Heart left ventricle (tissue), 16 donors: ENCODE measurements at regions of chr9 and their contacts with region 1.

Region 1: DNA sequence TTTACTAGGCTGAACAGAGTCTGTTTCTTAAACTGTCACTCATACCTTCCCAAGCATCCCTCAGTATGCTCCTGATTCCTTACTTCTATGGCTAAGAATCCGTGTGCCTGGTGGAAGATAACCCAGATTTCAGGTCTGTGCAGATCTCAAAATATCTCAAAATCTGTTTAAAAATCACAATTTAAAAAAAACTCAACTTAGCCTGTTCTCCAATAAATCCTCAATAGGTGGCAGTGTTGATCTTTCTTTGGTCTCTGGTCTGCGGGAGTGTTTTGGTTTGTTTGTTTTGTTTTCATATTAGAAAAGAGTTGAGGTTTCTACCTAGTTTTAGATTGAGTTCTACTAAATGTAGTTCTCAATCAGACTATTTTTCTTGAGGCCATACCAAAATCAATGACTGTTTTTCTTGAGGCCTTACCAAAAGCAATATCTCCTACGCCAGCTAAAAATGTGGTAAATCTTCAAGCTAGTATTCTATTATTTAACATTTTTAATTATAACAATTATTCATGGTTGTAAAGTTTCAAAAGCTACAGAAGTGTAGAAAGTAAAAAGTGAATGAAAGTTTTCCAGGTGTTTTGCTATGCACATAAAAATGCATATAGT is 57.9 kb downstream of the TGFBR1 start:
- DNase-seq: no peak
- ATAC-seq: no peak
- H3K4me3 ChIP-seq: no peak overlapping the region
- H3K27ac ChIP-seq: no peak overlapping the region
- H3K4me1 ChIP-seq: peaks cover 0 to 3% (median 0%) of the 10 kb centered on the region in 12 donors
- H3K27me3 ChIP-seq: no peaks in the 10 kb centered on the region
- CTCF ChIP-seq: peak; percentile 24 to 72 (median 55)
- POLR2A ChIP-seq: no peak

Region 2: DNA sequence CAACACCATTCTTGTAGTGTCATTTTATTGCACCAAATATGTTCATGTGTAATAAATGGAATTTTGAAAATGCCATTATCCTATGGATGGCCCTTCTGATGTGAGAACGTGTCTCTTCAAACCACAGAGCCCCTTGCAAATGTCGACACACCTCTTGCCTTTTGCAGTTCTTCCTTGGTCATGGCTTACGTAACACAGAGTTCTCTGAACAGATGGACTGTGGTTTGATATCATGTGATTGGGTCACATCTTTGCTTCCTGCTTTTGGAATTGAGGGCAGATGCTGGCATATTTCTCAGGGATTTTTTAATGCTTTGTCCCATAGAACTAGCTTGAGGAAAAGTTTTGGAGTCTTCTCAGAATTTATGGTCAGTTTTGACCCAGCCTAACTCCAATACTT is 53.3 kb before region 1 on chr9:
- intact Hi-C with region 1: no loop called
- DNase-seq: no peak
- ATAC-seq: no peak
- H3K4me3 ChIP-seq: no peak overlapping the region
- H3K27ac ChIP-seq: peak overlapping the region in 2 of 12 donors; percentile 26 to 61
- H3K4me1 ChIP-seq: peaks cover 0 to 88% (median 56%) of the 10 kb centered on the region in 12 donors
- H3K27me3 ChIP-seq: no peaks in the 10 kb centered on the region
- CTCF ChIP-seq: no peak
- POLR2A ChIP-seq: no peak

Region 3: DNA sequence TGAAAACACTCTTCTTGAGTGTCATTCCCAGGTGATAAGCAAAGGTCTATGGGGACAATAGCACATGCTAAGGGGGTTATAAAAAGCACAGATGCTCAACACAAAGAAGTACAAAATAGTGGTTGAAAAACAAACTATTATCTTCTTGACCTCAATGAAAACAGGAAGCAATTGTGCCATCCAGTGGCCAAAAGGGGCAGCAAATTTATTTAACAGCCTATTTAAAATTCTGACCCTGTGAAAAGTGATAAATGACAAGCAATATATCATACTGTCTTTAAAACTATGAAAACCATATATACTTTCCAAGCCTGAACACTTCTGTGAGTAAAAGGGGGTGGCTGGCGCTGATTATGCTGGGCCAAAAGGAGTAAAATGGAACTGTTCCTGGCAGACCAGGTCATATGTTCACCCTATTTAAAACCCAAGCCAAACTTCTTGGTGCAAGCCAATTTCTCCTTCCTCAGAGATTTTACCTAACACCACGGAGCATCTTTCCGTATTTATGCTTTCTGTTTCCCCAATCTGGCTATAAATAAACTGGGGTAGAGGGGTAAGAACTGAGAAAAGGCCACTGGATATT is 1160.2 kb after region 1 on chr9:
- intact Hi-C with region 1: loop called in 2 of 10 experiments (anchors 5 to 10 kb)
- DNase-seq: no peak
- ATAC-seq: no peak
- H3K4me3 ChIP-seq: no peak overlapping the region
- H3K27ac ChIP-seq: no peak overlapping the region
- H3K4me1 ChIP-seq: peaks cover 0 to 6% (median 0%) of the 10 kb centered on the region in 12 donors
- H3K27me3 ChIP-seq: no peaks in the 10 kb centered on the region
- CTCF ChIP-seq: peak; percentile 46 to 75 (median 62)
- POLR2A ChIP-seq: no peak